Gastrocnemius medialis (tissue), 4 donors: ENCODE measurements at regions of chr2 and their contacts with region 1.

Region 1: DNA sequence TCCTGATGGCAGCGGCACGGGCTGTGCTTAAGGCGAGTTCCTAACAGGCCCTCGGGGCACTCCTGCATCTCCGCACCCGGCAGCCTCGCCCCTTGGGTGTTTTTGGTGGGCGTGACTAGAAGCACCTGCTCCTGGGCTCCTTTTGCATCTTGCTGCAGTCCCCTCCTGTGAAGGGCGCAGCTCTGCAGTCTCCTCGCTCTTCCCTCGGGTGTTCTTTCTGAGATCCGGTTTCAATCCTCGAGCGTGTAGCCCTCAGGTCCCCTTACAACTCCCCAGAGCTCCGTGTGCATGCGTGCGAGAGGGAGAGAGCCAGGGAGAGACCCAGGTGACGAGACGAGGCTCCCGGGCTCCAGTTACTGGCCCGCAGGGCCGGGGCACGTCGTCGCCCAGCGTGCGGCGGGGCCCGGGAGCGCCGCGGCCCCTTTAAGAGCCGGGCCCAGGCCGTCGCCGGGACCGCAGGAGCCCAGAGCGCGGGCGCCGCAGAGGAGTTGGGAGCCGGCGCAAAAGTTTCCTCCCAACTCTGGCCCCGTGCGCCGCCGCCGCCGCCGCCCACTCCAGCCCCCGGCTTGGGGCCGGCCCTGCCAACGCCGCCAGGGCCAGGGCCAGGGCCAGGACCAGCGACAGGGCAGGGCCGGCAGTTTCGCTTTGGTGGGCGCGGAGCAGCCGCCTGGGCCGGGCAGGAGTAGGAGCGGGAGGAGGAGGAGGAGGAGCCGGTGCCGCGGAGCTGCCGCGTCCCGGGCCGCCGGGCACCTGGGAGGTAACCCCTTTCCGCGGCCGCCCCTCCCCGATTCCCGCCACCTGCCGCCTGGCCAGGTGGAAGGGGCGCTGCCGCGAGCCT is at the start of gene PARD3B:
- DNase-seq: peak; percentile 9 to 43
- ATAC-seq: peak; percentile 72 to 85
- H3K4me3 ChIP-seq: peak within 1 kb of the TSS; percentile 70 to 82 (median 78)
- H3K27ac ChIP-seq: peak within 1 kb of the TSS; percentile 47 to 82 (median 73)
- H3K4me1 ChIP-seq: peaks cover 14 to 20% of the 10 kb centered on the region in 2 donors
- H3K27me3 ChIP-seq: no peaks in the 10 kb centered on the region
- CTCF ChIP-seq: no peak
- POLR2A ChIP-seq: peak in 1 of 2 donors; percentile 34
- total RNA-seq, gene PARD3B: 2.2 to 15.5 (median 4.6) TPM

Region 2: DNA sequence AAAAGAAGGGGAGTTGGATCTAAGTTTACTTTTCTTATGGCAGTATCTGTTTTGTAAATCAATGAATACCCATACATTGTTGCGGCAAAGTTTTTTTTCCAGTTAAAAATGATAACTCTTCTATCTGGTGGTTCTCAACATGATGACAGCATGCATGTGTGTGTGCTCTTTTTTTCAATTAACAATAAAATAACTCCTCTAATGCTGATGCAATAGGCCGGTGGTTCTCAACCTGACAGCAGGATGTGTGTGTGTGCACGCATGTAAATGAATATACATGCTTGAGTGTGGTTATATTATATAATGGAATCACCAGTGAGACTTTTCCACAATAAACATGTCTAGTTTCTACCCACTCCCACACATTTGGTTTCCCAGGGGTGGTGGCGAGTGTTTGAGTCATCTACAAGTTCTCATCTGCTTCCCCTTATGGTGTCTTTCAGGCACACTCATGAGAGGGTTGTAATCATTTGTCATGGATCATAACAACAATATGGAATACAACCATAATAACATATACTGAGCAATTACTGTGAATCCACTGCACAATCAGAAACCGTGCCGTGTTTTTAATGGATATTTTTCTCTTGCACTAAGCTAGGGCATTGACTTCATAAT is 31.2 kb after region 1 on chr2:
- in situ Hi-C with region 1: no loop called
- intact Hi-C with region 1: no loop called
- DNase-seq: no peak
- ATAC-seq: no peak
- H3K4me3 ChIP-seq: no peak overlapping the region
- H3K27ac ChIP-seq: no peak overlapping the region
- H3K4me1 ChIP-seq: peaks cover 0 to 3% of the 10 kb centered on the region in 2 donors
- H3K27me3 ChIP-seq: no peaks in the 10 kb centered on the region
- CTCF ChIP-seq: no peak
- POLR2A ChIP-seq: no peak

Region 3: DNA sequence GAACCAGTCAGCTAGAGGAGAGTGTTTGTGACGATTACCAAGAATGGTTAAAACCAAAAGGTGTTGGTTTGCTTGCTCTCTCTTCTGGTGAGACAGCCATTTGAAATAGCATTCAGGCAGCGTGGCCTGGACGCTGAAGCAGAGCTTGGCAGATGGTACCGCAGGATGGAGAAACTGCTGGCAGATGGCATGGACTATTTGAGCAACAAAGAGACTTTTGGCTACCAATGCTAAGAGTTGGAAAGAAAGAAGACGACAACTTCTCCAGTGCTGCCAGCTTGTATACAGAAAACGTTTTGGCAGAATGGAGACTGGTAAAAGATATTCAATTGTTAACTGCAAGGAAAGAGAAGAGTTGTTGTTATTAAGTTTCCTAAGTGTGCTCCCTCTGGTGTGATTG is 315.0 kb after region 1 on chr2:
- in situ Hi-C with region 1: no loop called
- intact Hi-C with region 1: loop called (anchors 10 kb)
- DNase-seq: peak; percentile 60 to 74
- ATAC-seq: peak; percentile 98 to 99
- H3K4me3 ChIP-seq: peak overlapping the region in 1 of 4 donors; percentile 17
- H3K27ac ChIP-seq: peak overlapping the region; percentile 53 to 74 (median 55)
- H3K4me1 ChIP-seq: peaks cover 20 to 22% of the 10 kb centered on the region in 2 donors
- H3K27me3 ChIP-seq: no peaks in the 10 kb centered on the region
- CTCF ChIP-seq: no peak
- POLR2A ChIP-seq: no peak